GM12878 (cell line): ENCODE measurements at regions of chr1 and their contacts with region 1.

Region 1: GRCh38 chr1:100037927-100038659 is 68.3 kb downstream of the SLC35A3 start:
- DNase-seq: peak; percentile 53
- ATAC-seq: peak; percentile 86
- H3K4me3 ChIP-seq: peak overlapping the region; percentile 92
- H3K27ac ChIP-seq: peak overlapping the region; percentile 97
- H3K4me1 ChIP-seq: peaks cover 19% of the 10 kb centered on the region
- H3K27me3 ChIP-seq: no peaks in the 10 kb centered on the region
- CTCF ChIP-seq: no peak
- EP300 ChIP-seq: no peak
- POLR2A ChIP-seq: peak; percentile 99
- RAD21 ChIP-seq: no peak

Region 2: GRCh38 chr1:99969729-99970621 is 68.1 kb before region 1 on chr1 and contains the start of gene SLC35A3:
- CTCF ChIA-PET with region 1: interaction called, 3 read pairs
- POLR2A ChIA-PET with region 1: interaction called, 6 read pairs
- RAD21 ChIA-PET with region 1: interaction called, 4 read pairs
- SMC1A ChIA-PET with region 1: interaction called, 5 read pairs
- in situ Hi-C with region 1: no loop called
- intact Hi-C with region 1: loop called (anchors 5 kb)
- DNase-seq: peak; percentile 41
- ATAC-seq: peak; percentile 95
- H3K4me3 ChIP-seq: peak within 1 kb of the TSS; percentile 92
- H3K27ac ChIP-seq: peak within 1 kb of the TSS; percentile 68
- H3K4me1 ChIP-seq: no peaks in the 10 kb centered on the region
- H3K27me3 ChIP-seq: no peaks in the 10 kb centered on the region
- CTCF ChIP-seq: no peak
- EP300 ChIP-seq: no peak
- POLR2A ChIP-seq: peak; percentile 94
- RAD21 ChIP-seq: no peak
- polyA plus RNA-seq, gene SLC35A3: 3.6 to 4.9 TPM

Region 3: GRCh38 chr1:100077531-100077930 is 39.4 kb after region 1 on chr1:
- CTCF ChIA-PET with region 1: interaction called, 6 read pairs
- POLR2A ChIA-PET with region 1: interaction called, 8 read pairs
- RAD21 ChIA-PET with region 1: interaction called, 21 read pairs
- SMC1A ChIA-PET with region 1: interaction called, 40 read pairs
- in situ Hi-C with region 1: no loop called
- intact Hi-C with region 1: loop called (anchors 2 kb)
- DNase-seq: peak; percentile 72
- ATAC-seq: peak; percentile 79
- H3K4me3 ChIP-seq: peak overlapping the region; percentile 46; the same call in 1 of the 2 replicates
- H3K27ac ChIP-seq: peak overlapping the region; percentile 92
- H3K4me1 ChIP-seq: peaks cover 29% of the 10 kb centered on the region
- H3K27me3 ChIP-seq: no peaks in the 10 kb centered on the region
- CTCF ChIP-seq: no peak
- EP300 ChIP-seq: peak; percentile 63 to 65; a peak in 3 of 4 replicates
- POLR2A ChIP-seq: 0 out of 2 replicates have a peak, but pooled peaks have one; percentile 20
- RAD21 ChIP-seq: no peak

Region 4: DNA sequence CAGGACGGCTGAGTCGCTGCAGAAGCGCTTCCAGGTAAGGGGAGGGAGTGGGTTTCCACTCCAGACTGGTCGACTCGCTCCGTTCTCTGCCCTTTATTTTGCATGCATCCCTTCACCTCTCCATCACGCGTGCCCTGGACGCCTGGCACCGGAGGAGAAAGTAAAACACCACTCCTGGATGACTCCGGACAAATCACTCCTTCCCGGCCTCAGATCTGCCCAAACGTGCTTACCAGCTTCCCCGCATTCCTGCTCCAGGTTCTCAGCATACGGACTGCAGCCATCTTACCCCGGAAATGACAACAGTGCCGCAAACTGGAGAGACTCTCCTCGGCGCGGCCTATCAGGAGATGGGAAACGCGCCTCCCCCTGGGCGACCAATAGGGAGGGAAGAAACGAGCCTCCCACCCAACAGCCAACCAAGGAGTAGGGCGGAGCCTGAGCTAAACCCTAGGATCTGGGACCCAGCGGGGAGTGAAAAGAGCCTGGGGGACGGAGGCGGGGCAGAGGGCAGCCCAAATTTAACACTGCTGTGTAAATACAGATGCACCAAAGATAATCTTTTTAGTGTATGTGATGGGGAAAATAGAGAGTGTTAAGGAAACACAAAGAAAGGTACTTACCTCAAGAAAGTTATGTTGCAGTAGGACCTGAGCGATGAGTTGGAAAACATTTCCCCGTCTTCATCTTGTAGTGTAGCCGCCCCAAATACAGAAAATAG is 211.6 kb after region 1 on chr1 and contains the start of gene DBT:
- CTCF ChIA-PET with region 1: interaction called, 4 read pairs
- POLR2A ChIA-PET with region 1: no interaction called
- RAD21 ChIA-PET with region 1: no interaction called
- SMC1A ChIA-PET with region 1: no interaction called
- in situ Hi-C with region 1: no loop called
- intact Hi-C with region 1: loop called (anchors 5 kb)
- DNase-seq: peak; percentile 84
- ATAC-seq: peak; percentile 100
- H3K4me3 ChIP-seq: peak within 1 kb of the TSS; percentile 94
- H3K27ac ChIP-seq: peak within 1 kb of the TSS; percentile 79
- H3K4me1 ChIP-seq: peaks cover 3% of the 10 kb centered on the region; the same call in 1 of the 2 replicates
- H3K27me3 ChIP-seq: no peaks in the 10 kb centered on the region
- CTCF ChIP-seq: no peak
- EP300 ChIP-seq: no peak
- POLR2A ChIP-seq: peak; percentile 99
- RAD21 ChIP-seq: no peak
- polyA plus RNA-seq, gene DBT: 2.1 to 3.0 TPM

Region 5: DNA sequence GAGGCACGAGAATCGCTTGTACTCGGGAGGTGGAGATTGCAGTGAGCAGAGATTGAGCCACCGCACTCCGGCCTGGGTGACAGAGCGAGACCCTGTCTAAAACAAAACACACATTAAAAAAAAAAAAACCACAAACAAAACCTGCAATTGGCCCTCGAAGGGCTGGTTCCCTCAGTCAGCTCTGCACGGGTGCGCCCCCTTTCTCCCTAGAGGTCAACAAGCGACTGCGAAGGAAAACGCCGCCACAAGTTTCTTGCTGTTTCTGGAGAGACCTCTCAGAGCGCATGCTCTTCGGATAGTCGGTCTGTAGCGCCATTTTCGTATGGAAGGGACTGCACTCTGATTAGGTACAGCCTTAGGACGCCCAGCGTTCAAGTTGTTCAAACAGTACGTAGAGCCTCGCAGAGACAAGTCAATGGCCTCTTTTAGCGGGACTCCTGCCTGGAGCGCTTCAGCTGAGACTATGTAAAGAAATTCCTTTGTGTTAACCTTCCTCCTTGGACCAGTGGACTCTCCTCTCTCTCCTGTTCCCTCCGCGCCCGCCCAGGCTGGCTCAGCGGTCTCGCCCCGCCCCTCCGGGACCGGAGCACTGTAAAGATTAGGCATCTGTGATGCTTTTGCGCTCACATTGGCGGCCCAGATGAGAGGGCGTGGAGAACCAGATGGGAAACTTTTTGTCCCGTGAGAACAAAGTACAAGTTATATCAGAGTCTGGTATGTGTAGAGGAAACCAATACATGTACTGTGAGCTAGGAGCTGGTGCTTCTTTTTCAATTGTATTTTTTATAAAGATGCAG is 313.2 kb after region 1 on chr1:
- CTCF ChIA-PET with region 1: interaction called, 3 read pairs
- POLR2A ChIA-PET with region 1: interaction called, 3 read pairs
- RAD21 ChIA-PET with region 1: interaction called, 3 read pairs
- SMC1A ChIA-PET with region 1: interaction called, 4 read pairs
- in situ Hi-C with region 1: no loop called
- intact Hi-C with region 1: loop called (anchors 5 kb)
- DNase-seq: peak; percentile 82
- ATAC-seq: peak; percentile 70
- H3K4me3 ChIP-seq: peak overlapping the region; percentile 91
- H3K27ac ChIP-seq: peak overlapping the region; percentile 59
- H3K4me1 ChIP-seq: no peaks in the 10 kb centered on the region
- H3K27me3 ChIP-seq: no peaks in the 10 kb centered on the region
- CTCF ChIP-seq: peak; percentile 44 to 55 (median 53); a peak in 5 of 6 replicates
- EP300 ChIP-seq: no peak
- POLR2A ChIP-seq: peak; percentile 44
- RAD21 ChIP-seq: peak; percentile 53

Region 6: GRCh38 chr1:100810360-100810759 is 772.3 kb after region 1 on chr1:
- CTCF ChIA-PET with region 1: no interaction called
- POLR2A ChIA-PET with region 1: no interaction called
- RAD21 ChIA-PET with region 1: no interaction called
- SMC1A ChIA-PET with region 1: no interaction called
- in situ Hi-C with region 1: no loop called
- intact Hi-C with region 1: no loop called
- DNase-seq: no peak
- ATAC-seq: no peak
- H3K4me3 ChIP-seq: no peak overlapping the region
- H3K27ac ChIP-seq: no peak overlapping the region
- H3K4me1 ChIP-seq: no peaks in the 10 kb centered on the region
- H3K27me3 ChIP-seq: no peaks in the 10 kb centered on the region; a peak in 1 of 4 replicates
- CTCF ChIP-seq: no peak
- EP300 ChIP-seq: no peak
- POLR2A ChIP-seq: no peak
- RAD21 ChIP-seq: no peak